ENCODE measurements at regions of chr4 and their contacts with region 1.

Region 1: DNA sequence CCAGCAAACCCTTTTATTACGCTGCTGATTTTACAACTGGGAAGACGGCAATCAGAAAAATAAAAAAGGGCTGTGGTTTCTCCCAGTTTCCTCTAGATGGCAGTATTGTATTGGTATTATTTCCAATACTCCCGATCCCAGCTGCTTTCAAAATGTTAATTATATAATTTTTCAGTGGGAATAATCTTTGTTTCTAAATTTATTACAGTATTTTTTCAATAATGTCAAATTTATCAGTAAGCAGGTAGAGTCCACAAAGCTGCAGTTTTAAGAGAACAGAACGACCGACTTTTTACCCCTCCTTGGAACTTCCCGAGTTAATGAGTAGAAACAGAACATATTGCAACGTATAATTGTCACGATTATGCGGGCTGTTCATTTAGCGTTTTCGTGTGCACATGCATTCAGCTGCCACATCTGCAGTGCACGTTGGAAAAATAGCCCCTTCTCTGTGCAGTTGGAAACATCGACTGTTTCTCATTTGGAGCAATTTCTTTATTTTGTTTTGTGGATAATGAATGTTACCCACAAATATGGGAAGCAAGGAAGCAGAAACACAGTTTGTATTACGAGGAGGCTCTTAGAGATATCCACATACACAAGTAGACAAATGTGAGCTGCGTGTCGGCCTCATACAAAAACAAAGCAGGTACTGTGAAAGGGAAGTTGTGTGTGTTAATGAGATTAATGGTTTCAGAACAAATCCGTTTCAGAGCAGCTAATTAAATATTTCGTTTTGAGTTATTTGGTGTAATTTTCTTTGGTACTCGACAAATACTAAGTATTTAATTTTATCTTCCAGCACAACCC is 188.0 kb downstream of the STIM2 start:
- DNase-seq: peak; percentile 35
- H3K4me3 Mint-ChIP-seq: peak overlapping the region; percentile 64
- H3K27ac Mint-ChIP-seq: no peak overlapping the region
- H3K4me1 Mint-ChIP-seq: peaks cover 5% of the 10 kb centered on the region
- H3K27me3 Mint-ChIP-seq: no peaks in the 10 kb centered on the region
- CTCF ChIP-seq: peak; percentile 75

Region 2: GRCh38 chr4:26953366-26953765 is 95.3 kb before region 1 on chr4:
- CTCF ChIA-PET with region 1: no interaction called
- POLR2A ChIA-PET with region 1: no interaction called
- intact Hi-C with region 1: no loop called
- DNase-seq: no peak
- H3K4me3 Mint-ChIP-seq: no peak overlapping the region
- H3K27ac Mint-ChIP-seq: no peak overlapping the region
- H3K4me1 Mint-ChIP-seq: peaks cover 11% of the 10 kb centered on the region
- H3K27me3 Mint-ChIP-seq: no peaks in the 10 kb centered on the region
- CTCF ChIP-seq: no peak

Region 3: DNA sequence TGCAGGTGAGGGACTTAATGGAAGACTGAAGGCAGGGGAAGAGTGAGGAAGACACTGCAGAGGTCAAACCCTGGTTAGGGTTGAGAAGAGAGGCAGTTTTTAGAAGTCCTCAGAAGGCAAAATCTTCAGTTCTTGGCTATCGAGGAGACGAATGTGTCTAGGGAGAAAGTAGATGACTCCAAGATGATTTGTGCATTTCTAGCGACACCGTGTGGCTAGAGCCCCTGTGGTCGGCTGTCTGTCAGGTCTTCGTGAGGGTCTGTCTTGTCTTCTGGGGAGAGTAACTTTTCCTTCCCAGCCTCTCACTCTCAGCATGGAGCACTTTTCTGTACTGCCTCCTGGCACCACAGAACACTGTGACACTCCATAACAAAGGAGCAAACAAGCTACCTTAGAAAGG is 270.1 kb after region 1 on chr4:
- CTCF ChIA-PET with region 1: no interaction called
- POLR2A ChIA-PET with region 1: no interaction called
- intact Hi-C with region 1: loop called (anchors 1 kb)
- DNase-seq: peak; percentile 40
- H3K4me3 Mint-ChIP-seq: no peak overlapping the region
- H3K27ac Mint-ChIP-seq: no peak overlapping the region
- H3K4me1 Mint-ChIP-seq: no peaks in the 10 kb centered on the region
- H3K27me3 Mint-ChIP-seq: no peaks in the 10 kb centered on the region
- CTCF ChIP-seq: peak; percentile 35

Region 4: DNA sequence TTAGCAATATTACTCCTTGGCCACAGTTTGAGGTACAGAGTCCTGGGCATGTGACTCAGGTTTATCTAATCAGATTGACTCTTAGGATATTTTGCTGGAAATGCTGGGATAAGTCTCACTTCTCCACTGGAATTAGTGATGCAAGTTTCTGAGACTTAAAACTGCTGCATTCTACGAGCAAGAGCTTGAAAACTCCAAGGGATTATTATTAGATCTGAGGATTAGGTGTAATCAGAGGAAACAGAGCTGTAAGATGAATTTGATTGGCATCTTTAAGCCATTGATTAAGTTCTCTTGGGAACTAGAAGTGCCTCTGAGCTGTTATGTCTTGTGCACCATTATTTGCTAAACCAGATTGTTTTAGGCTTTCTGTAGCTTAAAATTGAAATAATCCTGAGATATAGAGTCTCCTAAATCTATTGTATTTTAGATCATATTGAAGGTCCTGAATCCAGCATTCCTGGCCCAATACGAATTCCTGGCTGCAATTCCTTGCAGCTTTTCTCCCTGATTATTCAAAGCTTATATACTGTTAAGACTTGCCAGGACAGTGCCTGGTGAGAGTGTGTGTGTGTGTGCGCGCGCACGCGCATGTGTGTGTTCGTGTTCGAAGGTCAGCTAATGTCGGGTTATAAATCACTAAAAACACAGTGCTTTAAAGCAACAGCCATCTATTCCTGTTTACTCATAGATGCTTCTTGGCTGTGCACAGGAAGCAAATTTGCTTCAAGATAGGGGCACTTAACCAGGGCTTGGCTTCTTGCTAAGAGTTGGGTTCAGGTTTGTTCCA is 547.1 kb after region 1 on chr4:
- CTCF ChIA-PET with region 1: no interaction called
- POLR2A ChIA-PET with region 1: no interaction called
- intact Hi-C with region 1: no loop called
- DNase-seq: no peak
- H3K4me3 Mint-ChIP-seq: no peak overlapping the region
- H3K27ac Mint-ChIP-seq: no peak overlapping the region
- H3K4me1 Mint-ChIP-seq: peaks cover 7% of the 10 kb centered on the region
- H3K27me3 Mint-ChIP-seq: no peaks in the 10 kb centered on the region
- CTCF ChIP-seq: no peak

Region 5: DNA sequence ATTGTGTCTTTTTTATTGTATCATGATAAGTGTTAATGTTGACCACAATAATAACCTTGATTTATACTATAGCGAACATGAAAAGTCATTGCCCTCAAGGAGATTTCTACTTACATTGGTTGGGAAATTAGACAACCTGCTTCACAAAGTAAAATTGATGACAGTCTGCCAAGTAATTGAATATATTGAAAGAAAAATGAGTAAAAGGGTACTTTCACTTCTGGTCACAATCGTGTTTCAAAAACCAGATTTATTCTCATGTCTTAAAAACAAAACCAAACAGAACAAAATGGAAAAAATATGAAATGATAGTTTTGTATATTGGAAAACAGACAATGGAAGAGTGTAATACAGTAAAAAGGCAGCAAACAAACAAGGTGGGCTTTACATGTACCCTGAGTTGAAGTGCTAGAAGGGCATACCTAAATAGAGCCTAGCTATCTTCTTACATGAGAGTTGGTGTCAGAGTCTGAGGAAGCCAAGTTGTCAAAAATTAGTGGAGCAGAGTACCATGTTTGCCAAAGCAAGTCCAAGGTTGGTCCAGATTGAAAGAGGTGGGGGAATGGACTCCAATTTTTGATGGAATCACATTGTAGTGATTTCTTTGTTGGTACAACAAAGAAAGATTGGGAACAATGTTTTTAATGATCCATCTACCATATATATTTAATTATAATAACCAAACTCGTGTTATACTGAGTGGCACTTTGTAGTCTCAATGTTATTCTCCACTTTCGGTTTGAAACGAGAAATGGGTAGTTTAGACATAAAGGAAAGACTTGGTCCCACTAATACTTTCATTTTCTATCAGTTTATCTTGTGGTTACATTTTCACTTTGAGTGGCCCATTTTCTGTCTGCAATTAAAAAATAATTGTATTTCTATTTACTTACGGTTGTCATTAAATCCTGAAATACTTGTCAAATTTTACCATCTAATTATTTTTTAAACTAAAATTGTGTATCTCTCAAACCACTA is 587.6 kb after region 1 on chr4:
- CTCF ChIA-PET with region 1: no interaction called
- POLR2A ChIA-PET with region 1: no interaction called
- intact Hi-C with region 1: loop called (anchors 10 kb)
- DNase-seq: no peak
- H3K4me3 Mint-ChIP-seq: no peak overlapping the region
- H3K27ac Mint-ChIP-seq: no peak overlapping the region
- H3K4me1 Mint-ChIP-seq: no peaks in the 10 kb centered on the region
- H3K27me3 Mint-ChIP-seq: no peaks in the 10 kb centered on the region
- CTCF ChIP-seq: no peak

Region 6: GRCh38 chr4:27861381-27862201 is 813.0 kb after region 1 on chr4:
- CTCF ChIA-PET with region 1: no interaction called
- POLR2A ChIA-PET with region 1: no interaction called
- intact Hi-C with region 1: loop called (anchors 10 kb)
- DNase-seq: peak; percentile 83
- H3K4me3 Mint-ChIP-seq: no peak overlapping the region
- H3K27ac Mint-ChIP-seq: no peak overlapping the region
- H3K4me1 Mint-ChIP-seq: peaks cover 11% of the 10 kb centered on the region
- H3K27me3 Mint-ChIP-seq: no peaks in the 10 kb centered on the region
- CTCF ChIP-seq: peak; percentile 66

Measured in MCF 10A (cell line).